ENCODE measurements at regions of chr1 and their contacts with region 1.

Region 1: DNA sequence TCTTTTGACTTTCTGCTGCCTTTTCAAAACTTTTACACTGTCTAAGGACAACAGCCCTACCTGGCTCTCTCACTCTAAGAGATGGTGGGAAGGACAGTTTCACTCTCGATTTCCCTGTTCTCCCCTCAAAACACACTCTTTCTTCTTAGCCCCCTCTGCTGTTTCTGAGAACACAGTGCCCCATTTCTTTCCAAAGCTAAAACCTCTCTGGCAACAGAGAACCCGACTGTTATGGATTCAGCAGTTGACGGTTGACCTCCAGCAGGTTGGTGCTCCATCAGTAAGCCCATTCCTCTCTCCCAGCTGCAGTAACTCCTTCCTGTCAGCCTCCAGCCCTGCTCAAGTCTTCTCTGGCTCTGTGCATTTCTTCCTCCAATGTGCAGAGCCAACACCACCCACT is 88.2 kb upstream of the ABCD3 start:
- DNase-seq: no peak
- H3K4me3 ChIP-seq: no peak overlapping the region
- H3K27ac ChIP-seq: peak overlapping the region in 1 of 2 donors; percentile 28
- H3K4me1 ChIP-seq: peaks cover 0 to 56% (median 37%) of the 10 kb centered on the region in 4 donors
- H3K27me3 ChIP-seq: no peaks in the 10 kb centered on the region
- CTCF ChIP-seq: peak; percentile 51 to 60

Region 2: GRCh38 chr1:94045465-94046056 is 284.4 kb before region 1 on chr1:
- intact Hi-C with region 1: loop called (anchors 2 kb)
- DNase-seq: peak; percentile 88 to 92
- H3K4me3 ChIP-seq: peak overlapping the region; percentile 12 to 32
- H3K27ac ChIP-seq: peak overlapping the region; percentile 48 to 69
- H3K4me1 ChIP-seq: peaks cover 0 to 50% (median 35%) of the 10 kb centered on the region in 4 donors
- H3K27me3 ChIP-seq: no peaks in the 10 kb centered on the region
- CTCF ChIP-seq: peak; percentile 60 to 72

Region 3: DNA sequence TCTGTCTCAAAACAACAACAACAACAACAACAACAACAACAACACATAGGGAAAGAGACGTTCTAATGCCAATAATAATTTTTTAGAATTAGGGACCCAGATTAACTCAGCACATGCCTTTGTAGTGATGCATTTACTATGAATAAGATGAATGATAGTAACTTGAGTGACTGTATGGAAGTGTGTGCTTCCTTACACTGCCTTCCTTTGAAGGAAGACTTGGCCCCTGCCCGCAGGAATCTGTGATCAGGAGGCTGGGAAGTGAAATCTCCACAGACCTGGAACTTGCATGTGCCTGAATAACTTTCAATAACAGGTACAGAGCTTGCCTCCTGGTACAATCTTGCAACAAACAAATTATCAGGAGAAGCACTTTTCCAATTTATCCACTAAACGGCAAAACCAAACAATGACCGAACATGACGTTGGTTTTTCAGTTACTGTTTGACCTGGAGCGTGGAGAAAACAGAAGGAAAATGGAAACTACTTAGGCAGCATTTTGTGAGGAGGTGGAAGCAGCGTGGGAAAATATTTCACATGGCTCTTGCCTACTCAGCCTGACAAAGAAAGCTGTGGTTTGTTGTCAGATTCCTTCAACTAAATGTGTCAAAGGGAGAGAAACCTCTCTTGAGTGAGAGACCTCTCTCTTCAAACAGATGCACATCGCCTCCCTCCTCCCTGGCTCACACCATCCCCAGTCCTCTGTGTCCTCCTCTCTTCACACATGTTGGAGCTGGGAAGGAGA is 199.0 kb before region 1 on chr1:
- intact Hi-C with region 1: no loop called
- DNase-seq: no peak
- H3K4me3 ChIP-seq: no peak overlapping the region
- H3K27ac ChIP-seq: no peak overlapping the region
- H3K4me1 ChIP-seq: peaks cover 0 to 15% (median 2%) of the 10 kb centered on the region in 4 donors
- H3K27me3 ChIP-seq: no peaks in the 10 kb centered on the region
- CTCF ChIP-seq: no peak

Region 4: DNA sequence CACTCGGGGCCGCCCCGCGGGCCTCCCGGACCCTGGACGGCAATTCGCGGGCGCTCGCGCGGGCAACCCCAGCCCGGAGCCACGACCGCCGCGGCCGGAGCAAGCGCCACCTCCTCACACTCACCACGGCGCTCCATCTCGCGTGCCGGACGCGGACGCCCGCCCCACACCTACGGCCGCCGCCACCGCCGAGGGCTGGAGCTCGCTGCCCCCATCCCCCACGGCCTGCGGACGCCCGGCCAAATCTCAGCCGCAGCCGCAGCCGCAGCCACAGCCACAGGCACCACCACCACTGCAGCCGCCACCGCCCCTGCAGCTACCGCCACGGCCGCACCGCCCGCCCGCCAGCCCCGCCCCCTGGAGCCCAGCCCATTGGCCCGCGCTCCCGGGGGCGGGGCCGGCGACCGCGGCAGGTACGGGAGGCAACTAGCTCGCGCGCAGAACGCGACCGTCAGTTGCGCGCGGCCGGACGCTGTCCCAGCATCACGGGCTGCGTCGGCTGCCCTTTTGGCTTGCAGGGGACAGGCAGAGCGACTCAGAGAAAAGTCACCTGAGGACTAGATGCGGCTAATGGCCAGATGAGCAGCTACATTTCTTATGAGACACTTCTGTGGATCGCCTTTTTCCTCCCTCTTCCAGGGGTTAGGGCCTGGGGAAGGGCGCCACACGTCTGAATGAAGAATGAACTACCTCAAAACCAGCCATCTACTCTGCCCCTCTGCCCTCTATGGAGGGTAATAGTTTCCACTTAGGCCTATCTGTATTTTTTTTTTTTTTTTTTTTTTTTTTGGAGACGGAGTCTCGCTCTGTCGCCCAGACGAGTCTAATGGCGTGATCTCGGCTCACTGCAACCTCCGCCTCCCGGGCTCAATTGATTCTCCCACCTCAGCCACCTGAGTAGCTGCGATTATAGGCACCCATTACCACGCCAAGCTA is 92.4 kb before region 1 on chr1 and contains the start of gene ARHGAP29:
- intact Hi-C with region 1: loop called (anchors 5 kb)
- DNase-seq: peak; percentile 64 to 91
- H3K4me3 ChIP-seq: peak within 1 kb of the TSS; percentile 86
- H3K27ac ChIP-seq: peak within 1 kb of the TSS; percentile 94
- H3K4me1 ChIP-seq: peaks cover 0 to 26% (median 10%) of the 10 kb centered on the region in 4 donors
- H3K27me3 ChIP-seq: no peaks in the 10 kb centered on the region
- CTCF ChIP-seq: no peak

Region 5: DNA sequence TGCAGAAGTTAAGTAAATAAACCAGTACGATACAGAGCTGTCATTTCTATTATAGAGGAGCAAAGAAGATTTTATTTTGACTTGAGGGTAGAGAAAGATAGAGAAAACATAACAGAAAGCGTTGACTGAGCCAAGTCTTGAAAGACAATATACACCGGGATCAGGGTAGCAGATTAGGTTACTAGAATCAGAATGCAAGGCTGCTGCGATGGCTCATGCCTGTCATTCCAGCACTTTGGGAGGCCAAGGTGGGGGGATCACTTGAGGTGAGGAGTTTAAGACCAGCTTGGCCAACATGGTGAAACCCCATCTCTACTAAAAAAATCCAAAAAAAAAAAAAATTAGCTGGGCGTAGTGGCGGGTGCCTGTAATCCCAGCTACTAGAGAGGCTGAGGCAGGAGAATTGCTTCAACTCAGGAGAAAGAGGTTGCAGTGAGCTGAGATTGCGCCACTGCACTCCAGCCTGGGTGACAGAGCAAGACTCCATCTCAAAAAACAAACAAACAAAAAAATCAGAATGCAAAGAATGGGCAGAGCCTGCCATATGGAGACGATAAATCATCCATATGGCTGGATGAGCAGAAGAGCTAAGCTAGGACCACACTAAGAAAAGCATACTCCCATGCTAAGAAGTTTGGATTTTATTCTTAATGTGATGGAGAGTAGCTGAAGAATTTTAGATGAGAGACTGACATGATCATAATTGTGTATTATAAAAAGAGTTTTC is 78.3 kb after region 1 on chr1:
- intact Hi-C with region 1: no loop called
- DNase-seq: no peak
- H3K4me3 ChIP-seq: no peak overlapping the region
- H3K27ac ChIP-seq: peak overlapping the region in 1 of 2 donors; percentile 24
- H3K4me1 ChIP-seq: peaks cover 0 to 13% (median 0%) of the 10 kb centered on the region in 4 donors
- H3K27me3 ChIP-seq: no peaks in the 10 kb centered on the region
- CTCF ChIP-seq: no peak